Activated B cell treated with CpG ODN at 0.5 μM for 24 hours (primary cell): ENCODE measurements at regions of chr3 and their contacts with region 1.

Region 1: DNA sequence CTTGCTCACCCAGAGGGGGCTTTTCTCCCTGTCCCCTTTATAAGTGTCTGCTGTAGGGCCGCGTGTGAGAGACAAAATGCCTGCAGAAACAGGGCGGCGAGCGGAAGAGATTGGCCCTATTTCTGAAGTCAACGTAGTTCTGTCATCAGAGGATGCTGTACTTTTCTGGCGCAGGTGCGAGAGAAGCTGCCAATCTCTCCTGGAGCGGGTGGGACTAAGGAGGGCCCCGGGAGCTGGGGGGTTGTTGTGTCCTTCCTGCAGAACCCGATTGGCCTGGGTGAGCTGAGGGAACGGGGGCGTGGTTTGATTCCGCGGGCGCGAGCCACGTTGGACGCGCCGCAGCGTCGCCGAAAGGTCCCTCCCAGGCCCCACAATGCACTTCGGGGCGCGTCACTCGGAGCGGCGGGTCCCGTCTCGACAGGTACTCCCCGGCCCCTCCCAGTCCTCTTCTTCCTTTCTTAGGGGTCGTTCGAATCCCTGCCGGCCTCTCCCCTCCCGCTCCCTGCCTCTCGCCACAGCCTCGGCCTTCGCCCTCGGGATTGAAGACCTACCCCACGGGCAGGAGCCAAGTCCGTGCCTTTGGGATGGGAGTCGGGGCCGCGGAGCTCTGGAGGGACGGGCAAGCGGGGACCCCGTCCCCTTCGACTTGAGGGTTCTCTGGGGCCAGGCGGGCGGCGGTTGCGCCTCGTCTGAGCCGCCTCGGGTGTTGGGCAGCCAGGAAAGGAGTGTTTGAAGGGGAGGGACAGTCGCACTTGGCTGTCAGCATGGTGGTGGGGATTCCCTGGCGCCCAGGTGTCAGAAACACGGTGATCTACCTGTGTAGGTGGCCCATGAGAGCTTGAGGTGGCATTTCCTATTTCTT is at the start of gene SEC22A:
- DNase-seq: peak; percentile 88
- ATAC-seq: peak; percentile 96
- H3K4me3 Mint-ChIP-seq: peak within 1 kb of the TSS; percentile 96
- H3K27ac Mint-ChIP-seq: peak within 1 kb of the TSS; percentile 97
- H3K4me1 Mint-ChIP-seq: peaks cover 16% of the 10 kb centered on the region
- H3K27me3 Mint-ChIP-seq: peaks cover under 1% of the 10 kb centered on the region
- CTCF ChIP-seq: no peak
- total RNA-seq, gene SEC22A: 13.5 and 15.9 TPM in 2 replicates

Region 2: DNA sequence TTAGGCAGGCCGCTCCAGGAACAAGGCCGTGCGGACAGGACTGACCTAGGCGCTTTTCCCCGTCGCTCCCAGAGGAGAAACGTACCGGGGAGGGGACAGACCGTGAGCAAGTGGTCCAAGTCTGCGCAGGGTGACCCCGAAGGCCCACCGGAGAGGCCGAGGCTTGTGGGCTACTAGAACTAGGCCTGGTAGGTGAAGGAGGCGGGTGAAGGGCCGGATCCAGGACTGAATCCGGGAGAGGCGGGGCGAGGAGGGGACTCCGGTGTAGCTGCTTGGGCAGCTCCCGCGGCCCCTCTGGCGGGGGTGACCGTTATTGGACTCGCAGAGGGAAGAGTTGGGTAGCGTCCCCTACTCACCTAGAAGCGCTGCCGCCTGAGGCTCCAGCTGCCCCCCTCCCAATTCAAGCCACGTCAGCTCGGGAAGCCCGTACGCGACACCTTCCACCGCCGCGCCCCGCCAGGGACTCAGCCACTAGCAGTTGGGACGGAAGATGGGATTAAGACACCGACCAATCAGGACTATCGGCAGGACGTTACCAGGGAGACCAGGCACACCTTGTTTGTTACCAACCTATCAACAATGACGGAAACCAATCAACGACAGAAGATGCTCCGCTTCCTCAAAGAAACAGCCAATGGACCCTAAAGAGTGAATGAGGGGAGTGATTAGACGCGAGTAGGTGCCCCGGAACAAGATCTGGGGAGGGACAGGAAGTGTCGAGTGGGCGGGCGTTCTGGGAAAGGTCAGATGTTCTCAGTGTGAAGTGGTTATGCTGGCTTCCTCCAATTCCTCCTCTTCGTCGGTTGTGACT is 1452.3 kb before region 1 on chr3 and contains the start of gene GOLGB1:
- CTCF ChIA-PET with region 1: no interaction called
- POLR2A ChIA-PET with region 1: no interaction called
- intact Hi-C with region 1: loop called (anchors 2 kb)
- DNase-seq: peak; percentile 81
- ATAC-seq: peak; percentile 93
- H3K4me3 Mint-ChIP-seq: no peak within 1 kb of the TSS
- H3K27ac Mint-ChIP-seq: no peak within 1 kb of the TSS
- H3K4me1 Mint-ChIP-seq: peaks cover 4% of the 10 kb centered on the region
- H3K27me3 Mint-ChIP-seq: no peaks in the 10 kb centered on the region
- CTCF ChIP-seq: no peak
- total RNA-seq, gene GOLGB1: 37.3 and 44.7 TPM in 2 replicates

Region 3: DNA sequence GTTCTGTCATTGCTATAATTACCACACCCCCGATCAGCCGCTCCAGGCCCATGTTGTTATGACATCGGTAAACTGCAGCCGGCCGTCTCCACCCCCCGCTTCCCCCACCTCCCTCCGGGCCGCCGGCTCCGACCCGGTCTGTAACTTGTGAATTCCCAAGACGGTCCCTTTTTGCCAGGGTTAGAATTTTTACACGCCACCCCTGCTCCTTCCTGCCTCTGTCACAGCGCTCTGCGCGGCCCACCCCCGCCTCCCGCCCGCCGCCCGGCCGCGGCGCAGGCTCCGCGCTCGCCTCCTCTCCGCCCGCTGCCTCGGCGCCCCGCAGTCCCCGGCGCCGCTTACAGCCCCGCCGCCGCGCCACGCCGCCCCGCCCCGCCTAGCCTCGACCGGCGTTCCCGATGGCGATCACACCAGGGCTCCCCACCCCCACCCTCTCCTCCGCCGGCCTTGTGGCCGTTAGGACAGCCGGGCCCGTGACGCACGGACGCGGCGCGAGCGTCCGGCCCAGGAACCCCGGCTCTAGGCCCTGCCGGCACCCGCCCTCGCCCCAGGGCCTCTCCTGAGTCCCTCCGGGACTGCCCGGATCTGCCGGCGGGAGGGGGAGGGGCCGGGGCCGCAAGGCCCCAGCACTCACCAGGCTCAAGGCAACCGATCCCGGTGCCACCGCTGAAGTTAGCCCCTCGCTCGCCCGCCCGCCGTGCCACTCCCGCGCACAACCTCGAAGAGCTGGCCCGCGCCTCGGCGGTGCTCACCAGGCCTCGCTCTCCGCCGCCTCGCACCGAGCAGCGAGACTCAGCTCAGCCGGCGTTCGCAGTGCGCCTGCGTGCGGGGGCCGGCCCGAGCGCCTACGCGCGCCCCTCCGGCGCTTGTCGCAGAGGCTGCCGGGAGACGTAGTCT is 687.4 kb before region 1 on chr3 and contains the start of gene KPNA1:
- CTCF ChIA-PET with region 1: no interaction called
- POLR2A ChIA-PET with region 1: no interaction called
- intact Hi-C with region 1: loop called (anchors 2 kb)
- DNase-seq: peak; percentile 92
- ATAC-seq: peak; percentile 83
- H3K4me3 Mint-ChIP-seq: peak within 1 kb of the TSS; percentile 85
- H3K27ac Mint-ChIP-seq: peak within 1 kb of the TSS; percentile 82
- H3K4me1 Mint-ChIP-seq: peaks cover 42% of the 10 kb centered on the region
- H3K27me3 Mint-ChIP-seq: no peaks in the 10 kb centered on the region
- CTCF ChIP-seq: no peak
- total RNA-seq, gene KPNA1: 72.9 and 76.4 TPM in 2 replicates

Region 4: DNA sequence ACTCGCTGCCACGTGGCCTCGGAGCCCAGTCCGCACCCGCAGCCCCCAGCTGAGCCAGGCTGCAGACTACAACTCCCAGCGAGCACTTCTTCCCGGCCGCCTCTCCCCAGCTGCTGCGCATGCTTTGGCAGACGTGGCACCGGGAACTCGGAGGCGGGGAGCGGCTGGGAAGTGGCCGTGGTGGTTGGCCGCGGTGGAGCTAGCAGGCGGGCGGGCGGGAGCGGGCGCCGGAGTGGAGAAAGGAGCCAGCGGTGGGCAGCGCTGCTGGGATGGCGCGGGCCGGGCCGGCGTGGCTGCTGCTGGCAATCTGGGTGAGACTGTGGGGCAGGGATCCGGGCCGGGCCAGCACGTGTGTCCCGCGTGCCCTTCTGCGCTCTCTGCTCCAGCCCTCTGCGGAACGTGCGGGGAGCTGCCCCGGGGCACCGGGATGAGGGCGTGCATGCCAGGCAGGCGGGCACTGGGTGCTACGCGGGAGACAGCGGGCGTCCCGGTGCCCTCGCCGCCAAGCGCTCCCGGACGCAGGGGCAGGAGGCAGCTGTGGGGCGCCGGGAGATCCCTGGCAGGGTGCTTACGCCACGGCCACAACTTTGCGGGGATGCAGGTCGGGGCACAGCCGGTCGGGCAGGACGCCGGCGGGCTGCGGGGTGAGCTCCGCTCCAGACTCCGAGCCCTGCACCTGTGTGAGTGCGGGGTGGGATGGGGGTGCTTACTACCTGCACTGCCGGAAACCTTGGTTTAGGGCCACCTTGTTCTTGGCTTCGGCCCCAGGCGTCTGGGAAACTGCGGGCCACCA is 134.7 kb before region 1 on chr3 and contains the start of gene PDIA5:
- CTCF ChIA-PET with region 1: no interaction called
- POLR2A ChIA-PET with region 1: no interaction called
- intact Hi-C with region 1: loop called (anchors 5 kb)
- DNase-seq: peak; percentile 53
- ATAC-seq: peak; percentile 81
- H3K4me3 Mint-ChIP-seq: peak within 1 kb of the TSS; percentile 85
- H3K27ac Mint-ChIP-seq: peak within 1 kb of the TSS; percentile 57
- H3K4me1 Mint-ChIP-seq: peaks cover 17% of the 10 kb centered on the region
- H3K27me3 Mint-ChIP-seq: peaks cover 5% of the 10 kb centered on the region
- CTCF ChIP-seq: no peak
- total RNA-seq, gene PDIA5: 8.5 and 10.7 TPM in 2 replicates